Activated CD4-positive, alpha-beta memory T cell treated with anti-CD3 and anti-CD28 coated beads for 36 hours (primary cell): ENCODE measurements at regions of chr7 and their contacts with region 1.

Region 1: DNA sequence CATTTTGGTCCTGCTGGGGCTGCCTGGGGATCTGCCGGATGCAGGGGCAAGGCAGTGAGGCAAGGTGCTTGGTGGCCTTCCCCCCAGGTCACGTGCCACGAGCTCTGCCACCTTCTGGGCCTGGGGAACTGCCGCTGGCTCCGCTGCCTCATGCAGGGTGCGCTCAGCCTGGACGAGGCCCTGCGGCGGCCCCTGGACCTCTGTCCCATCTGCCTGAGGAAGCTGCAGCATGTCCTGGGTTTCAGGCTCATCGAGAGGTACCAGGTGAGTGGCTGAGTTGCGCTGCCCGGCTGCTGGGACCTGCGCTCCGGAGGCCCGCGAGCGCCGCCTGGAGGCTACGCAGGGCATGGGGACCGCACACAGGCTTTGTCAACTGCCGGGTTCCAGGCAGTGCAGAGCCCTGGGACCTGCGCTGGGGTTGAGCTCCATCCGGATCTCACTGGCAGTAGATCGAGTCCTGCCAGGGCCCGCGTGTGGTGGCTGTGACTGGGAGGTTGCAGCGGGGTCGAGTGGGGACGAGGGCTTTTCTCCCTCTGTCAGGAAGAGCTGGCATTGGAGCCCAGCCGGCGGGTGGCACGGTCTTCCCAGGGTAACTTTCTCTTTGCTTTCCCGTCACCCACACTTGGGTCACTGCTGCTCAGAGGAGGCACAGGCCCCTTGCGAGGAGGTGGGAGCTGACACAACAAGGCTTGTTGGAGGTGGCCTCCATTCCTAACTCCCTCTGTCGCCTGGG is 21.7 kb downstream of the AMZ1 start:
- DNase-seq: peak; percentile 90
- H3K4me3 Mint-ChIP-seq: peak overlapping the region; percentile 75
- H3K27ac Mint-ChIP-seq: peak overlapping the region; percentile 82
- H3K4me1 Mint-ChIP-seq: peaks cover 21% of the 10 kb centered on the region
- H3K27me3 Mint-ChIP-seq: no peaks in the 10 kb centered on the region

Region 2: DNA sequence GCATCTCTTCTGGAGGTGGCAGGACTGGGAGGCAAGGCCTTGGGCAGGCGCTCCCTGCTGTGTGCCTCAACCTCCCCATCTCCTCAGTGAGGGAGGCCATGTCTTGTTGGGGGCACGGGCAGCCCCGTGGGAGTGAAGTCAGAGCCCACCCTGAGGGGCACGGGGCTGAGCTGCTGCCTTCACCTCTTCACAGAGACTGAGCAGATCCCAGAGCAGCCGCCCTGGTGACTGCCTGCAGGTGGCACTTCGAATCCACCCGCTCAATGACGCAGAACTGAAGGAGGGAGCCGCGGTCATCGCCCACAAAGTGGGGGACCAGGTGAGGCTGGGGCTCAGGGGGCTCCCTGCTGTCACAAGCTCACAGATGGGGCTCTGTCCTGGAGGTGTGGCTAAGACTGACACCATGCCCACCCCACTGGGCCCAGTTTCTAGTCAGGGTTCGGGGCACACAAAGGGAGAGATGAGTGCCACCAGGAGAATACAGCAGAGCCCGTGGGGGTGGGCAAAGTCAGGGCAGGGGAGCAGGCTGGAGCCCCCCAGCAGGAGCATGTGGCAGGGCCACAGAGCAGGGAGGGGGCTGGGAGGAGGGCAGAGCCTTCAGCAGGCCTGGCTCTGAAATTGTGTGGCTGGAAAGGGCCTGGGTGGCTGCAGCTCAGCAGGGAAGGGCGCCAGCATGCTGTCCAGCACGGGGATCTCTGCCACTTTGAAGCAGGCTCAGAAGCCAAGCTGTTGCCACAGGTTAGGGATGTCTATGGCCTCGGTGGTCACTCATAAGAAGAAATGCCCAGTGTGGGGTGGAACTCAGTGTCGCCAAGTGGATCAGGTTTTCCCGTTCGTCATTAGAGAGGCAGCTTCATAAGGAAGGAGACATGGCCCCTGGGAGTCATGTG is 325.1 kb before region 1 on chr7:
- CTCF ChIA-PET with region 1: no interaction called
- POLR2A ChIA-PET with region 1: no interaction called
- intact Hi-C with region 1: no loop called
- DNase-seq: peak; percentile 19
- H3K4me3 Mint-ChIP-seq: no peak overlapping the region
- H3K27ac Mint-ChIP-seq: no peak overlapping the region
- H3K4me1 Mint-ChIP-seq: no peaks in the 10 kb centered on the region
- H3K27me3 Mint-ChIP-seq: no peaks in the 10 kb centered on the region

Region 3: GRCh38 chr7:2632733-2633537 is 76.8 kb before region 1 on chr7:
- CTCF ChIA-PET with region 1: interaction called, 10 read pairs
- POLR2A ChIA-PET with region 1: interaction called, 5 read pairs
- intact Hi-C with region 1: no loop called
- DNase-seq: peak; percentile 66
- H3K4me3 Mint-ChIP-seq: peak overlapping the region; percentile 87
- H3K27ac Mint-ChIP-seq: peak overlapping the region; percentile 60
- H3K4me1 Mint-ChIP-seq: peaks cover 15% of the 10 kb centered on the region
- H3K27me3 Mint-ChIP-seq: peaks cover 1% of the 10 kb centered on the region

Region 4: GRCh38 chr7:2680792-2681490 is 28.8 kb before region 1 on chr7:
- CTCF ChIA-PET with region 1: interaction called, 24 read pairs
- POLR2A ChIA-PET with region 1: no interaction called
- intact Hi-C with region 1: no loop called
- DNase-seq: peak; percentile 72
- H3K4me3 Mint-ChIP-seq: no peak overlapping the region
- H3K27ac Mint-ChIP-seq: no peak overlapping the region
- H3K4me1 Mint-ChIP-seq: no peaks in the 10 kb centered on the region
- H3K27me3 Mint-ChIP-seq: peaks cover 5% of the 10 kb centered on the region

Region 5: DNA sequence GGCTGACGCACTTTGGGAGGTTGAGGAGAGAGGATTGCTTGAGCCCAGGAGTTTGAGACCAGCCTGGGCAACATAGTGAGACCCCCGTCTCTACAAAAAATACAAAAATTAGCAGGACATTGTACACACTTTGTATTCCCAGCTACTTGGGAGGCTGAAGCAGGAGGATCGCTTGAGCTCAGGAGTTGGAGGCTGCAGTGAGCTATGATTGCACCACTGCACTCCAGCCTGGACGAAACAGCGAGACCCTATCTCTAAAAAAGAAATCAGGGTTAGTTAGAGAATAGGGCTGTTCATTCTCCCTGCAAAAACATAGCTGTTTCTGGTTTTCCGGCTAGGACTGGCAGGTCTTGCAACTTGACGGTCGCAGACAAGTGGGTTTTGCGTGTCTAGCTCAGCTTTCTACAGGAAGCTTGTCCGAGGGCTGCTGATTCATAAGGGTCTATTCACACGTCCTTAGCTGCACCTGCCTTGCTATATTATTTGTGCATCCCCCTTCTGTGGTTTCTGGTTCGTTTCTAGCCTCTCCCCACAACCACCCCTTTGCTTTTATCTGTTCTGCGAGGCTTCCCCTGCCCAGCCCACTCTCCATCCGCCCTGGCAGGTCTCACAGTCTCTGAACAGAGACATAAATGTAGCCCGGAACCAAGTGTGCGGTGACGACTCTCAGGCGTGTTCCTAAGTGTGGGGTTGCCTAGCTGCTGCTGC is 11.0 kb before region 1 on chr7:
- CTCF ChIA-PET with region 1: interaction called, 42 read pairs
- POLR2A ChIA-PET with region 1: interaction called, 11 read pairs
- intact Hi-C with region 1: no loop called
- DNase-seq: peak; percentile 79
- H3K4me3 Mint-ChIP-seq: peak overlapping the region; percentile 30
- H3K27ac Mint-ChIP-seq: peak overlapping the region; percentile 40
- H3K4me1 Mint-ChIP-seq: peaks cover 18% of the 10 kb centered on the region
- H3K27me3 Mint-ChIP-seq: no peaks in the 10 kb centered on the region

Region 6: DNA sequence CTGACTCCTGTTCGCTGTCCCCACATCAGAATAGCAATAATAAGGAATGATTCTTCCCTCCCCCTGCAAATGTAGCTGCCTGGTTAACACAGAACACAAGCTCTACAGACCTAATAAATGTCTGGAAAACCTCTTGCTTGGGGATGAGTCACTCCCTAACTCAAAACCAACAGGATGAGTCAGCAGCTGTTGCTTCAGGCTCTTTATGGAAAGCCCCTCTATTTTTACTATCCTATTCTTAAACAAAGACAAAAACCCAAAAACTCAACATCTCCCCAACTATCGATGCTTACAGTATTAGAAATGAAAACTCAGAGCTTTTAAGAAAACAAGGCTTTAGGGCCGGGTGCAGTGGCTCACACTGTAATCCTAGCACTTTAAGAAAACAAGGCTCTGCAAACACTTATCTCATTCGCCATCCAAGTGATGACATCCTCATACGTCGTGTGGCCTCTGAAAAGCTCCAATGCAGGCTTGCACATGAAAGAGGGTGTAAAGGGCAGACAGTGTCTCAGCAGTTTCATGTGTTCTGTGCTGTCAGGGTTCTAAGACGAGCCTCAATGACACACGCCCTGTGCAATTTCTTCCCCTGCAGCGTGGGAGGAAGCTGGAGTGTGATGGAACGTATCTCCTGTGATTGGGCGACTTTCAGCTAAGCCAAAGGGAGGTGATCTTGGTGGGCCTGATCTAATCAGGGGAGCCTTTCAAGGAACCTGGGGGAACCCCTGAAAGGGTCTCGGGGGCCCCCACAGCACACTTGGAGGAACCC is 48.4 kb after region 1 on chr7:
- CTCF ChIA-PET with region 1: interaction called, 30 read pairs
- POLR2A ChIA-PET with region 1: interaction called, 13 read pairs
- intact Hi-C with region 1: no loop called
- DNase-seq: peak; percentile 93
- H3K4me3 Mint-ChIP-seq: peak overlapping the region; percentile 57
- H3K27ac Mint-ChIP-seq: peak overlapping the region; percentile 96
- H3K4me1 Mint-ChIP-seq: peaks cover 47% of the 10 kb centered on the region
- H3K27me3 Mint-ChIP-seq: no peaks in the 10 kb centered on the region